Activated naive CD4-positive, alpha-beta T cell treated with anti-CD3 and anti-CD28 coated beads for 36 hours (primary cell): ENCODE measurements at regions of chr4 and their contacts with region 1.

Region 1: GRCh38 chr4:112284662-112285411 is 867 bp downstream of the TIFA start:
- DNase-seq: no peak
- H3K4me3 Mint-ChIP-seq: peak overlapping the region; percentile 97
- H3K27ac Mint-ChIP-seq: peak overlapping the region; percentile 97
- H3K4me1 Mint-ChIP-seq: peaks cover 72% of the 10 kb centered on the region
- H3K27me3 Mint-ChIP-seq: no peaks in the 10 kb centered on the region

Region 2: DNA sequence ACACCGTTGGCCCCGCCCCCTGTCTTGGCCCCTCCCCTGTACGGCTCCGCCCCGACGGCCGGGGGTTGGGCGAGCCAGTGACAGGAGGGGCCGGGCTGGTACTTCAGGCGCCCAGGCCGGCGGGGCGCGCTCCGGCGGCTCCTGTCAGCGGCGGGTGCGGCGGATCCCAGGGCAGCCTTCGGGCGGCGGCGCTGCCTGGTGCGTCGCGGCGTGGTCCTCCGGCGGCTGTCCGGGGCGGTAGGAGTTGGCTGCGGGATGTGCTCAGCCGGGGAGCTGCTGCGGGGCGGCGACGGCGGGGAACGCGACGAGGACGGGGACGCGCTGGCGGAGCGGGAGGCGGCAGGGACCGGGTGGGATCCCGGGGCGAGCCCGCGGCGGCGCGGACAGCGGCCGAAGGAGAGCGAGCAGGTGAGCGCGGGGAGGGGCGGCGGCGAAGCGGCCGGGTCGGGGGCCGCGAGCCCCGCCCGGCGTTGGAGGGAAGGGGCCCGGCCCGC is 139.5 kb before region 1 on chr4 and contains the start of gene FAM241A:
- CTCF ChIA-PET with region 1: no interaction called
- intact Hi-C with region 1: loop called (anchors 1 kb)
- DNase-seq: peak; percentile 89
- H3K4me3 Mint-ChIP-seq: peak within 1 kb of the TSS; percentile 91
- H3K27ac Mint-ChIP-seq: peak within 1 kb of the TSS; percentile 93
- H3K4me1 Mint-ChIP-seq: peaks cover 30% of the 10 kb centered on the region
- H3K27me3 Mint-ChIP-seq: no peaks in the 10 kb centered on the region
- total RNA-seq, gene FAM241A: 2.2 to 2.5 TPM

Region 3: GRCh38 chr4:112296949-112297880 is 12.4 kb after region 1 on chr4 and contains the start of gene ALPK1:
- CTCF ChIA-PET with region 1: interaction called, 14 read pairs
- intact Hi-C with region 1: loop called (anchors 1 kb)
- DNase-seq: no peak
- H3K4me3 Mint-ChIP-seq: peak within 1 kb of the TSS; percentile 81
- H3K27ac Mint-ChIP-seq: peak within 1 kb of the TSS; percentile 94
- H3K4me1 Mint-ChIP-seq: peaks cover 21% of the 10 kb centered on the region
- H3K27me3 Mint-ChIP-seq: no peaks in the 10 kb centered on the region
- total RNA-seq, gene ALPK1: 38.8 to 39.9 TPM

Region 4: GRCh38 chr4:112302320-112303274 is 17.8 kb after region 1 on chr4:
- CTCF ChIA-PET with region 1: interaction called, 14 read pairs
- intact Hi-C with region 1: loop called (anchors 1 kb)
- DNase-seq: peak; percentile 47
- H3K4me3 Mint-ChIP-seq: no peak overlapping the region
- H3K27ac Mint-ChIP-seq: no peak overlapping the region
- H3K4me1 Mint-ChIP-seq: peaks cover 21% of the 10 kb centered on the region
- H3K27me3 Mint-ChIP-seq: no peaks in the 10 kb centered on the region

Region 5: GRCh38 chr4:112321776-112322684 is 37.2 kb after region 1 on chr4:
- CTCF ChIA-PET with region 1: interaction called, 7 read pairs
- intact Hi-C with region 1: loop called (anchors 1 kb)
- DNase-seq: peak; percentile 90
- H3K4me3 Mint-ChIP-seq: no peak overlapping the region
- H3K27ac Mint-ChIP-seq: no peak overlapping the region
- H3K4me1 Mint-ChIP-seq: peaks cover 19% of the 10 kb centered on the region
- H3K27me3 Mint-ChIP-seq: no peaks in the 10 kb centered on the region

Region 6: DNA sequence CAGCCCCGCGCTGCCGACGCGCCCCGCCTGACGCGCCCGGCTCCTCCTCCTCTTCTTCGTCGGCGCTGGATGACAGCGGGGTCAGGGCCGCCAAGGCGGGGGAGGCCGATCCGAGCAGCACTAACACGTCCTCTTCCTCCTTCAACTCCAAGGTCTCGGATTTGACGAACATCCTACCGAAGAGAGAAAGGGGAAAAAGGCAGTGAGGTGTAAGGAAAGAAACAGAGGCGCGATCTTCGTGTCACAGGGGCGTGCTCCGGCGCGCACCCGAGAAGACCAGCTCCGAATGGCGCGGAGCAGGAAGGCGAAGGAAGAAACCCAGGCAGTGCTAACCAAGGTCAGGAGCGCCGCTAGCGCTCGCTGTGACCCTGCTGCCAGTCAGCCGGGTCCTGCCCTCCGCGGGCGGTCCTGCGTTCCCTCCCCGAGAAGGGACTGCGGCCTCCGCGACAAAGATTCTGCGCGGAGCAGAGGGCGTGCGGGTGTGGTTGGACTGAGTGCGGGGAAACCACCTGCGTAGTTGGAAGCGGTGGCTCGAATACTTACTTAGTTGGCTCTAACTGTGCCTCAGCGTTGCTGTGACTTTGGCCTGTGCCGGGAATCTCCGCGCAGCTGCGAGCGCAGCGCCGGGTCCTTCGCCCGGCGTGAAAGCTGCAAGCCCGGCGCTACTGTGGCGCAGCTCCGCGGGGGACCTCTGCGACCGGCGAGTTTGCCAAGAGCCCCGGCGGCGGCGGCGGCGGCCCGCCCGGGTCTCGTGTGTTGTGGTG is 230.6 kb after region 1 on chr4:
- CTCF ChIA-PET with region 1: no interaction called
- intact Hi-C with region 1: loop called (anchors 2 kb)
- DNase-seq: peak; percentile 66
- H3K4me3 Mint-ChIP-seq: peak overlapping the region; percentile 96
- H3K27ac Mint-ChIP-seq: no peak overlapping the region
- H3K4me1 Mint-ChIP-seq: peaks cover 38% of the 10 kb centered on the region
- H3K27me3 Mint-ChIP-seq: peaks cover 83% of the 10 kb centered on the region

Region 7: GRCh38 chr4:112735474-112735951 is 450.7 kb after region 1 on chr4:
- CTCF ChIA-PET with region 1: no interaction called
- intact Hi-C with region 1: loop called (anchors 5 kb)
- DNase-seq: peak; percentile 21
- H3K4me3 Mint-ChIP-seq: no peak overlapping the region
- H3K27ac Mint-ChIP-seq: no peak overlapping the region
- H3K4me1 Mint-ChIP-seq: peaks cover 14% of the 10 kb centered on the region
- H3K27me3 Mint-ChIP-seq: no peaks in the 10 kb centered on the region